ENCODE measurements at regions of chr5 and their contacts with region 1.

Region 1: GRCh38 chr5:135977375-135977928 is 22.7 kb upstream of the LECT2 start:
- DNase-seq: peak in 4 of 5 donors; percentile 29 to 51 (median 39)
- H3K4me3 ChIP-seq: no peak overlapping the region
- H3K4me3 Mint-ChIP-seq: no peak overlapping the region
- H3K27ac ChIP-seq: no peak overlapping the region
- H3K27ac Mint-ChIP-seq: no peak overlapping the region
- H3K4me1 ChIP-seq: no peaks in the 10 kb centered on the region
- H3K4me1 Mint-ChIP-seq: no peaks in the 10 kb centered on the region
- H3K27me3 ChIP-seq: no peaks in the 10 kb centered on the region
- H3K27me3 Mint-ChIP-seq: peaks cover 11 to 21% of the 10 kb centered on the region in 2 donors

Region 2: GRCh38 chr5:136062366-136063274 is 85.2 kb after region 1 on chr5:
- CTCF ChIA-PET with region 1: interaction called, 10 read pairs
- POLR2A ChIA-PET with region 1: no interaction called
- intact Hi-C with region 1: no loop called
- DNase-seq: peak in 4 of 5 donors; percentile 32 to 44 (median 38)
- H3K4me3 ChIP-seq: no peak overlapping the region
- H3K4me3 Mint-ChIP-seq: no peak overlapping the region
- H3K27ac ChIP-seq: no peak overlapping the region
- H3K27ac Mint-ChIP-seq: no peak overlapping the region
- H3K4me1 ChIP-seq: no peaks in the 10 kb centered on the region
- H3K4me1 Mint-ChIP-seq: peaks cover 0 to 4% (median under 1%) of the 10 kb centered on the region in 4 donors
- H3K27me3 ChIP-seq: no peaks in the 10 kb centered on the region
- H3K27me3 Mint-ChIP-seq: no peaks in the 10 kb centered on the region

Measured in CD4-positive, alpha-beta memory T cell (primary cell).